HEK293 (cell line): ENCODE measurements at regions of chr22 and their contacts with region 1.

Region 1: DNA sequence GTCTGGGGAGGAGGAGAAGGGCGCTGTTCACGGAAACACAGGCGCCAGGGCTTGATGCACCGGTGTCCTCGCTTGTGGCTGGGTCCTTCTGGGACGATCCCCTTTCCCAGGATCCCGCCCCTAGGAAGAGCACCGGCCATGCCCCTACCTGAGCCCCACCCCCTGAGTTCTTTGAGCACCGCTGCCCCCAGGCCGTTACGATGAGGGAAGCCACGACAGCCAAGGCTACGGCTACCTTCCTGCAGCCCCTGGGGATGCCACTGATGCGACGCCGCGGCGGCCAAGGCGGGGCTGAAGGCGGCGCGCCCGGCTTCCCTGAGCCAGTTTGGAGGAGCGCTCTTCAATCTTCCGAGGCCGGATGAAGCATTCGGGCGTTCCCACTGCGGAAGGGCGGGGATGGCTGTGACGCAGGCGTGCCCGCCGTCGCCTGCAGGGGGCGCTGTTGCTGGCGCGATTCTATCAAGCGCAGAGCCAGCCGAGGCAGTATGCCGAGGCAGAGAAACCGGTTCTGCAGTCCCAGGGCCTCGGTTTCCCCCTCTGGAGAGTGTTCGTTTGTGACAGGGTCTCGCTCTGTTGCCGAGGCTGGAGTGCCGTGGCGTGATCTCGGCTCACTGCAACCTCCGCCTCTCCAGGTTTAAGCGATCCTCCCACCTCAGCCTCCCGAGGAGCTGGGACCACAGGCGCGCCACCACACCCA is 9.7 kb upstream of the NEFH start:
- H3K4me3 ChIP-seq: peak overlapping the region; percentile 62
- H3K27ac ChIP-seq: no peak overlapping the region
- H3K4me1 ChIP-seq: no peaks in the 10 kb centered on the region
- CTCF ChIP-seq: peak; percentile 96

Region 2: GRCh38 chr22:29394931-29395581 is 75.3 kb before region 1 on chr22:
- CTCF ChIA-PET with region 1: interaction called, 12 read pairs
- POLR2A ChIA-PET with region 1: no interaction called
- H3K4me3 ChIP-seq: no peak overlapping the region
- H3K27ac ChIP-seq: no peak overlapping the region
- H3K4me1 ChIP-seq: peaks cover 3% of the 10 kb centered on the region; the same call in 1 of the 2 replicates
- CTCF ChIP-seq: peak; percentile 96

Region 3: DNA sequence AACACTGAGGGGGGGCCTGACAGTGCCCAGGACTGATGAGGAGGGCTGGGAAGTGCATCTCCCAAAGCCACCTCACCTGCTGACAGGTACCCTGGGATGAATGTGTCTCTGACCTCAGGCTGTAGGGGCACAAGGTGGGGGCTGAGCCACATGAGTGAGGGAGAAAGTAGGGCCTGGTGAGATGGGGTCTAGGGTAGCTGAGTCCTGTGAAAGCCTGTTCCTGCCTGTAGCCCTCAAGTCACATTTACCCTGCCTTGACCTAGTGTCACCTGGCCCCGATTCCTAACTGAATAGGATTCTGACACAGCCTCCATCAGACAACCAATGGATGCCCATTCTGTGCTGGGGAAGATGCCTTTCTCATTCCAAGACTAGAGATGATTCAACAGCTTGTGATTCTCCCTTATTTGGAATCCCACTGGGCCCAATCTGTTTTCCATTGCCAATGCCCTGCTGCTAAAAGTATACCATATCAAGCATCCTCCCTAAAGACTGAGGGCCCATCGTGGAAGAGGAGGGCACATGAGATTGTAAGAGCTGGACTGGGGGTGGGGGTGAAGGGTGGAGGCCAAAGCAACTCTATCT is 43.0 kb before region 1 on chr22:
- CTCF ChIA-PET with region 1: interaction called, 16 read pairs
- POLR2A ChIA-PET with region 1: no interaction called
- H3K4me3 ChIP-seq: no peak overlapping the region
- H3K27ac ChIP-seq: no peak overlapping the region
- H3K4me1 ChIP-seq: no peaks in the 10 kb centered on the region
- CTCF ChIP-seq: no peak

Region 4: DNA sequence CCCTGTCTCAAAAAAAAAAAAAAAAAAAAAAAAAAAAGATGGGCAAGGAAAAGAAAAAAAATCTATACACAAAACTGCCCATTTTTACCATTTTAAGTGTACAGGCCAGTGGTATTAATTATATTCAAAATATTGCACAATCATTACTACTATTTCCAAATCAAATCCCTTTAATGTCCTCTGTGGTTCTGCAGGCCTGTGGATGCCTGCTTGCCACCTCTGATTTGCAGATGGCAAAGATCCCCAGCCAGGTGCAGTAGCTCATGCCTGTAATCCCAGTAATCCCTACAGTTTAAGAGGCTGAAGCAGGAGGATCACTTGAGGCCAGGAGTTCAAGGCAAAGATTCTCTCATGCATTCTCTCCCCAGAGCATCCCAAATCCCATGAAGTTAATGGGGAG is 11.8 kb before region 1 on chr22:
- CTCF ChIA-PET with region 1: interaction called, 12 read pairs
- POLR2A ChIA-PET with region 1: interaction called, 3 read pairs
- H3K4me3 ChIP-seq: no peak overlapping the region
- H3K27ac ChIP-seq: no peak overlapping the region
- H3K4me1 ChIP-seq: no peaks in the 10 kb centered on the region
- CTCF ChIP-seq: no peak

Region 5: DNA sequence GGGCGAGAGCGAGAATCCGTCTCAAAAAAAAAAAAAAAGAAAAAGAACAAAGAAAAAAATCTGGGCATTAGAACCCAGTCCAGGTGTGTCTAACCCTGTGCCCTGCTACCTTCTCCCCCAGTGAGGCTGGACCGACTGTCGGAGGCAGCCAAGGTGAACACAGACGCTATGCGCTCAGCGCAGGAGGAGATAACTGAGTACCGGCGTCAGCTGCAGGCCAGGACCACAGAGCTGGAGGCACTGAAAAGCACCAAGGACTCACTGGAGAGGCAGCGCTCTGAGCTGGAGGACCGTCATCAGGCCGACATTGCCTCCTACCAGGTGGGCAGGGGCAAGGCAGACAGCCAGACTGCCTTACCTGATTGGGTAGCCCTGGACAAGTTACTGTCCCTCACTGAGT is 12.9 kb after region 1 on chr22:
- CTCF ChIA-PET with region 1: interaction called, 10 read pairs
- POLR2A ChIA-PET with region 1: no interaction called
- H3K4me3 ChIP-seq: no peak overlapping the region
- H3K27ac ChIP-seq: no peak overlapping the region
- H3K4me1 ChIP-seq: no peaks in the 10 kb centered on the region
- CTCF ChIP-seq: no peak

Region 6: GRCh38 chr22:29524440-29525191 is 54.3 kb after region 1 on chr22:
- CTCF ChIA-PET with region 1: interaction called, 13 read pairs
- POLR2A ChIA-PET with region 1: no interaction called
- H3K4me3 ChIP-seq: no peak overlapping the region
- H3K27ac ChIP-seq: no peak overlapping the region
- H3K4me1 ChIP-seq: no peaks in the 10 kb centered on the region
- CTCF ChIP-seq: peak; percentile 76